CD4-positive, alpha-beta T cell (primary cell): ENCODE measurements at regions of chr22 and their contacts with region 1.

Region 1: DNA sequence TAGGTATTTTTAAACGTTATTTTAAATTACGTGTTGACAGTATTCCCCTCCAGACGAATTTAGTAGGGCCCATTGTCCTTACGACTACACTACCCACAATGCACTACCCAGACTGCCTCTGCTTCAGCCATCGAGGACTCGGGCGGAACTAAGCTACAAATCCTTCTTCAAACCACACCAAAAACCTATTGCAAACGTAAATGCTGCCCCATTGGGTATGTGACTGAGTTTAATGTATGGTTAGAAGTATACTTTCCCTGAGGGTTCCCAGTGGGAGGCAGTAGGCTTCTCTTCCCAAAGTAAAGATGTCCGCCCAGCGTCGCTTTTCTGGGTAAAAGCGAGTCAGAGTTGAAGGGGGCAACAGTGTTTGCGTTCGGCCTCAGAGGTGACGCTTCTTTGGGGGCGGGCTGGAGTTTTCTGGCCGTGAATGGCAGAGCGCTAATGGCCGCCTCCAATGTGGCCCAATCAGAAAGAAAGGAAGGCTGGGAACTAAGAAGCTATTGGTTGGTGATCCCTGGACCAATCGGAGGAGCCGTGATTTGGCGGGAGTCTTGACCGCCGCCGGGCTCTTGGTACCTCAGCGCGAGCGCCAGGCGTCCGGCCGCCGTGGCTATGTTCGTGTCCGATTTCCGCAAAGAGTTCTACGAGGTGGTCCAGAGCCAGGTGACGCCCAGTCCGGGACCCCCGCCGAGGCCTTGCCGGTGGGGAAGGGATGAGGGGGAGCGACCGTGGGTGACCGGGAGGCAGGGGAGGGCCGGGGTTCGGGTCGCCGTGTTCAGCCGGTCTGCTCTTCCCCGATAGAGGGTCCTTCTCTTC is at the start of gene CDC45:
- DNase-seq: peak; percentile 88 to 98 (median 91)
- ATAC-seq: peak; percentile 89
- H3K4me3 ChIP-seq: peak within 1 kb of the TSS; percentile 75
- H3K4me3 Mint-ChIP-seq: peak within 1 kb of the TSS; percentile 96
- H3K27ac ChIP-seq: peak within 1 kb of the TSS; percentile 95 to 98
- H3K27ac Mint-ChIP-seq: peak within 1 kb of the TSS; percentile 100
- H3K4me1 ChIP-seq: peaks cover 22% of the 10 kb centered on the region
- H3K4me1 Mint-ChIP-seq: peaks cover 31% of the 10 kb centered on the region
- H3K27me3 ChIP-seq: no peaks in the 10 kb centered on the region
- H3K27me3 Mint-ChIP-seq: no peaks in the 10 kb centered on the region
- CTCF ChIP-seq: no peak
- total RNA-seq, gene CDC45: 0.75 to 0.82 TPM

Region 2: GRCh38 chr22:19122143-19122751 is 357.3 kb before region 1 on chr22 and contains the start of gene DGCR2:
- CTCF ChIA-PET with region 1: no interaction called
- POLR2A ChIA-PET with region 1: interaction called, 3 read pairs
- intact Hi-C with region 1: loop called in 1 of 2 experiments (anchors 1 kb)
- DNase-seq: peak; percentile 95 to 99 (median 96)
- ATAC-seq: peak; percentile 97
- H3K4me3 ChIP-seq: peak within 1 kb of the TSS; percentile 95
- H3K4me3 Mint-ChIP-seq: peak within 1 kb of the TSS; percentile 94
- H3K27ac ChIP-seq: peak within 1 kb of the TSS in 1 of 2 donors; percentile 73
- H3K27ac Mint-ChIP-seq: peak within 1 kb of the TSS; percentile 87
- H3K4me1 ChIP-seq: peaks cover 52% of the 10 kb centered on the region
- H3K4me1 Mint-ChIP-seq: peaks cover 52% of the 10 kb centered on the region
- H3K27me3 ChIP-seq: no peaks in the 10 kb centered on the region
- H3K27me3 Mint-ChIP-seq: no peaks in the 10 kb centered on the region
- CTCF ChIP-seq: no peak
- total RNA-seq, gene DGCR2: 31.9 to 35.5 TPM

Region 3: GRCh38 chr22:19178656-19179496 is 300.7 kb before region 1 on chr22 and contains the start of gene SLC25A1:
- CTCF ChIA-PET with region 1: interaction called, 3 read pairs
- POLR2A ChIA-PET with region 1: interaction called, 12 read pairs
- intact Hi-C with region 1: loop called (anchors 2 to 5 kb)
- DNase-seq: peak; percentile 26 to 94 (median 74)
- ATAC-seq: peak; percentile 57
- H3K4me3 ChIP-seq: peak within 1 kb of the TSS; percentile 78
- H3K4me3 Mint-ChIP-seq: peak within 1 kb of the TSS; percentile 93
- H3K27ac ChIP-seq: peak within 1 kb of the TSS; percentile 14 to 59
- H3K27ac Mint-ChIP-seq: peak within 1 kb of the TSS; percentile 77
- H3K4me1 ChIP-seq: peaks cover 40% of the 10 kb centered on the region
- H3K4me1 Mint-ChIP-seq: peaks cover 18% of the 10 kb centered on the region
- H3K27me3 ChIP-seq: no peaks in the 10 kb centered on the region
- H3K27me3 Mint-ChIP-seq: no peaks in the 10 kb centered on the region
- CTCF ChIP-seq: no peak
- total RNA-seq, gene SLC25A1: 17.6 to 18.0 TPM

Region 4: DNA sequence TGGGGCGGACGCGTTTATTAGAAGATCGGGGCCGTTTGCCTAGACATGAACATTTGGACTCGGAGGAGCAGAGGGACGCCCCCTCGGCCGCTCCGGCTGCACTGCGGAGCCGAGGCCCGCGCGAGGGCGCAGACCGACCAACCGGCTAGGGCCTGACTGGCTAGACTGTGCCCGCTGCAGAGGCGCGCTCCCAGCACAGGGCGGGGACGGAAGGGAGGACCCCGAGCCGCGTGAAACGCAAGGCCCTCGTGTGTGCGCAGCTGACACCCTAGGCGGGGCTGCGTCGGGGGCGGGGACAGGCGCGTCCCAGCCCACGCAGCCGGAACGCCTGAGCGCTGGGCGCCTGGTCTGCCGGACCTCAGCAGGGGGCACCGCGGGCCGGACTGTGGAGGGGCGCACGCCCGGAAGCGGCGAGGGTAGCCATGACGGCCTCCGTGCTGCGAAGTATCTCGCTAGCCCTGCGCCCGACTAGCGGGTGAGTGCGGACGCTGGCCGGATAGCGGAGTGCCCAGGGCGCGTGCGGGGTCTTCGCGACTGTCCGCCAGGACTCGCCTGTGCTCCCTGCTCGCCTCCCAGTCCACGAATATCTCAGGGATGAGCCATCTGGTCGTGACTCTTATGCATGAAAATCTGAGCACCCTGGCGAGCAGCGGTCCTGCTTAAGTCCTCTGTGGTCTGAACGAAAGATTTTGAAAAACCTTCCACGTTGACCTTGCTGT is 47.3 kb before region 1 on chr22 and contains the start of gene MRPL40:
- CTCF ChIA-PET with region 1: no interaction called
- POLR2A ChIA-PET with region 1: interaction called, 54 read pairs
- intact Hi-C with region 1: loop called (anchors 1 to 5 kb)
- DNase-seq: peak; percentile 66 to 93 (median 86)
- ATAC-seq: peak; percentile 80
- H3K4me3 ChIP-seq: peak within 1 kb of the TSS; percentile 89
- H3K4me3 Mint-ChIP-seq: peak within 1 kb of the TSS; percentile 97
- H3K27ac ChIP-seq: peak within 1 kb of the TSS; percentile 87 to 88
- H3K27ac Mint-ChIP-seq: peak within 1 kb of the TSS; percentile 93
- H3K4me1 ChIP-seq: peaks cover 35% of the 10 kb centered on the region
- H3K4me1 Mint-ChIP-seq: peaks cover 48% of the 10 kb centered on the region
- H3K27me3 ChIP-seq: no peaks in the 10 kb centered on the region
- H3K27me3 Mint-ChIP-seq: no peaks in the 10 kb centered on the region
- CTCF ChIP-seq: no peak
- total RNA-seq, gene MRPL40: 10.7 to 11.3 TPM

Region 5: GRCh38 chr22:19598054-19598855 is 118.7 kb after region 1 on chr22:
- CTCF ChIA-PET with region 1: no interaction called
- POLR2A ChIA-PET with region 1: interaction called, 16 read pairs
- intact Hi-C with region 1: no loop called
- DNase-seq: peak in 9 of 14 experiments; percentile 18 to 48 (median 42)
- ATAC-seq: peak; percentile 30
- H3K4me3 ChIP-seq: peak overlapping the region; percentile 0
- H3K4me3 Mint-ChIP-seq: peak overlapping the region; percentile 57
- H3K27ac ChIP-seq: peak overlapping the region; percentile 74 to 87
- H3K27ac Mint-ChIP-seq: peak overlapping the region; percentile 93
- H3K4me1 ChIP-seq: peaks cover 51% of the 10 kb centered on the region
- H3K4me1 Mint-ChIP-seq: peaks cover 76% of the 10 kb centered on the region
- H3K27me3 ChIP-seq: no peaks in the 10 kb centered on the region
- H3K27me3 Mint-ChIP-seq: no peaks in the 10 kb centered on the region
- CTCF ChIP-seq: no peak

Region 6: DNA sequence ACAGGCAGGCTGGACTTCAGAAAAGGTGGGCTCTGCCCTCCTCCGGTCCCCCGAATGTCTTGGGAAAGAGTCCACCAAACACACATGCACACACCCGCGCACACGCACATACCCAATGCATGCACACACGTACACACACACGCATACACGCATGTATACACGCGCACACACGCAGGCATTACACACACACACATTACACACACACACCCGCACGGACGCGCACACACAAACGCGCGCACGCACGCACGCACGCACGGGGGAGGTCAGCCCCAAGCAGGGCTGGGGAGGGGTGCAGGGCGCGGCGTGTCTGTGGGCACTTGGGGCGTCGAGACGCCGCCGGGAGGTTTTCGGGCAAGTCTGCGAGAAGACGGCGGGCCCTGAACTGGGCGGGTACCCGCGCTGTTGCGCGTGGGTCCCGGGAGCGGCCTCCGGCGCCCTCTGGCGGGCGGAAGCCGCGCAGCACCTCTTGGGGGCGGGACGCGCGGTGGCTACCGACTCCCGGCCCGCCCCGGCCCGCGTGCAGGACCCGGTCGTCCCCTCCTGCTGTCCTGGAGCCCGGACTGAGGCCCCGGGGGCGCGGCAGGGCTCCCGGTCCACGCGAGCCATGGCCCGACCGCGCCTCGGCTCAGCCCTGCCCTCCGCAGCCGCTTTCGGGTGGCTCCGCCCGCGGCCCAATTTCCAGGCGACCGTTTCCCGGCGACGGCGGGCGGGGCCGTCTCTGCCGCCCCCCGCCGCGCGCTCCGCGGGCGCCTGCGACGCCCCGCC is 238.3 kb after region 1 on chr22:
- CTCF ChIA-PET with region 1: no interaction called
- POLR2A ChIA-PET with region 1: no interaction called
- intact Hi-C with region 1: loop called in 1 of 2 experiments (anchors 5 kb)
- DNase-seq: peak; percentile 68 to 91 (median 78)
- ATAC-seq: peak; percentile 95
- H3K4me3 ChIP-seq: peak overlapping the region; percentile 31
- H3K4me3 Mint-ChIP-seq: peak overlapping the region; percentile 82
- H3K27ac ChIP-seq: no peak overlapping the region
- H3K27ac Mint-ChIP-seq: no peak overlapping the region
- H3K4me1 ChIP-seq: peaks cover 35% of the 10 kb centered on the region
- H3K4me1 Mint-ChIP-seq: peaks cover 10% of the 10 kb centered on the region
- H3K27me3 ChIP-seq: peaks cover 58 to 63% of the 10 kb centered on the region in 2 experiments
- H3K27me3 Mint-ChIP-seq: peaks cover 45% of the 10 kb centered on the region
- CTCF ChIP-seq: peak; percentile 96